CD4-positive, alpha-beta T cell (primary cell): ENCODE measurements at regions of chr2 and their contacts with region 1.

Region 1: DNA sequence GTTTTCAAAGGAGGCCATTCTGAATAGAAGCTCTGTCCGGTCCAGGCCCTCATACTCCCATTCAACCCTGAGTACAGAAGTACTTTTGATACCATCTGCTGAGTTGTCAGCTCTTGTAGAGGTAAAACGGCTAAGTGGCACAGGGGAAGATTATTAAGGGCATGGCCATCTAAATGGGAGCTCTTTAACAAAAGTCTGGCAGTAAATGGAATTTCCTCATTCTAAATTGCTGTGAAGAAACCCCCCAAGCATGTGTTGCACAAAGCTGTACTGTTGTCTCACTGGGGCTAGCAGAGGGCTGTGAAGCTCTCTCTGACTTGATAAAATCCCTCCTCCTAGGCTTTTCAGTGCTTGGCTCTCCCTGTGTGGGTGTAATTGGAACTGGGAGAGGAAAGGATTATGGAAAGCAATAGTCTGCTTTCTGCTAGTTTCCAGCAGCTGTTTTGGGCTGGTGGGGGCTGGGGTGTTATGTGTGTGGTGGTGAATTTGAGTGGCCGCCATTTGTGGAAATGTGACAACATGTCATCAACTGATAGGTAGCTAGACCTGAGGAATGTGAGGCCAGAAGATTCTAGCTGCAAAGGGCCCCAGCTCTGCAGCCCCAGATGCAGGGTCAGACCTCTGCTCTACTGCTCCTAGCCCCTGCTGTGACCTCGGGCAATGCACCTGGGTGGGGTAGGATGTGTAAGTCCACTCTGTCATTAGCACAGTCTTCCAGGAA is 65.1 kb downstream of the MAP4K4 start:
- DNase-seq: no peak
- ATAC-seq: no peak
- H3K4me3 ChIP-seq: no peak overlapping the region
- H3K4me3 Mint-ChIP-seq: no peak overlapping the region
- H3K27ac ChIP-seq: no peak overlapping the region
- H3K27ac Mint-ChIP-seq: peak overlapping the region; percentile 71
- H3K4me1 ChIP-seq: peaks cover 40% of the 10 kb centered on the region
- H3K4me1 Mint-ChIP-seq: peaks cover 80% of the 10 kb centered on the region
- H3K27me3 ChIP-seq: no peaks in the 10 kb centered on the region
- H3K27me3 Mint-ChIP-seq: no peaks in the 10 kb centered on the region
- CTCF ChIP-seq: no peak

Region 2: DNA sequence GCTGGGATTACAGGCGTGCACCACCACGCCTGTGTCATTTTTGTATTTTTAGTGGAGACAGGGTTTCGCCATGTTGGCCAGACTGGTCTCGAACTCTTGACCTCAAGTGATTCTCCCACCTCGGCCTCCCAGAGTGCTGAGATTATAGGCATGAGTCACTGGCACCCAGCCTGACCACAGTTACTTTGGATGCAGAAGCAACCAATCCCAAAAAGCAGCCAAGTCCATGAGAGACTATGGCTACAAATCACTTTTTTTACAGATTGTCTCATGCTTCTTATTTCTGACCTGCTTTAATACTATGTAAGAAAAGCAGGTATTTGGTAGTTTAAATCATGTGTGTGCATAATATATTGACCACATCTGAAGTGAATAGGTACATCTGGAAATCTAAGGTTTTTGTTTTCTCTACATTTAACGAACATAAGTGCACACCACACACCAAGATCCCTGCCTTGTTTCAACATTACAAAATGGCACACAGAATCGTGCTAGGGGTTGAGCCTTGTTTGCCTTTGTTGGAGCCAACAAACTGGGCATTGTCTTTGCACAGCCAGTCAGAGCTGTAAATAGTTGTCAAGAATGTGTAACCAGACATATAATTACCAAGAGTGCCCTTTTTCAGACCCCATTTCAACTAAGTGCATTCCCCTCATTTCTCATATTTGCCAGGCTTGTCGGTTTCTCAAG is 83.4 kb before region 1 on chr2:
- CTCF ChIA-PET with region 1: no interaction called
- POLR2A ChIA-PET with region 1: no interaction called
- intact Hi-C with region 1: no loop called
- DNase-seq: no peak
- ATAC-seq: no peak
- H3K4me3 ChIP-seq: no peak overlapping the region
- H3K4me3 Mint-ChIP-seq: no peak overlapping the region
- H3K27ac ChIP-seq: no peak overlapping the region
- H3K27ac Mint-ChIP-seq: no peak overlapping the region
- H3K4me1 ChIP-seq: no peaks in the 10 kb centered on the region
- H3K4me1 Mint-ChIP-seq: no peaks in the 10 kb centered on the region
- H3K27me3 ChIP-seq: no peaks in the 10 kb centered on the region
- H3K27me3 Mint-ChIP-seq: no peaks in the 10 kb centered on the region
- CTCF ChIP-seq: no peak

Region 3: GRCh38 chr2:101751875-101752619 is 10.6 kb before region 1 on chr2:
- CTCF ChIA-PET with region 1: interaction called, 11 read pairs
- POLR2A ChIA-PET with region 1: interaction called, 3 read pairs
- intact Hi-C with region 1: no loop called
- DNase-seq: no peak
- ATAC-seq: no peak
- H3K4me3 ChIP-seq: no peak overlapping the region
- H3K4me3 Mint-ChIP-seq: peak overlapping the region; percentile 12
- H3K27ac ChIP-seq: no peak overlapping the region
- H3K27ac Mint-ChIP-seq: peak overlapping the region; percentile 69
- H3K4me1 ChIP-seq: peaks cover 38% of the 10 kb centered on the region
- H3K4me1 Mint-ChIP-seq: peaks cover 80% of the 10 kb centered on the region
- H3K27me3 ChIP-seq: no peaks in the 10 kb centered on the region
- H3K27me3 Mint-ChIP-seq: no peaks in the 10 kb centered on the region
- CTCF ChIP-seq: no peak